ENCODE measurements at regions of chr12 and their contacts with region 1.

Region 1: GRCh38 chr12:115916910-115917668 is 360.4 kb downstream of the MED13L start:
- DNase-seq: peak; percentile 50 to 87 (median 78)
- ATAC-seq: peak; percentile 96
- H3K4me3 ChIP-seq: no peak overlapping the region
- H3K27ac ChIP-seq: no peak overlapping the region
- H3K4me1 ChIP-seq: peaks cover 0 to 7% of the 10 kb centered on the region in 2 experiments; a peak in 1 of 5 replicates
- H3K27me3 ChIP-seq: peaks cover 0 to 5% of the 10 kb centered on the region in 2 experiments; a peak in 1 of 5 replicates
- CTCF ChIP-seq: peak; percentile 84 to 89 (median 85)
- EP300 ChIP-seq: no peak
- POLR2A ChIP-seq: no peak
- RAD21 ChIP-seq: peak; percentile 68 to 89

Region 2: GRCh38 chr12:114625294-114625851 is 1291.7 kb before region 1 on chr12:
- CTCF ChIA-PET with region 1: interaction called, 13 read pairs
- POLR2A ChIA-PET with region 1: no interaction called
- in situ Hi-C with region 1: no loop called
- intact Hi-C with region 1: no loop called
- DNase-seq: peak; percentile 48 to 68 (median 63)
- ATAC-seq: peak; percentile 85
- H3K4me3 ChIP-seq: no peak overlapping the region
- H3K27ac ChIP-seq: no peak overlapping the region
- H3K4me1 ChIP-seq: no peaks in the 10 kb centered on the region
- H3K27me3 ChIP-seq: no peaks in the 10 kb centered on the region; a peak in 1 of 5 replicates
- CTCF ChIP-seq: peak; percentile 71 to 77 (median 75)
- EP300 ChIP-seq: no peak
- POLR2A ChIP-seq: no peak
- RAD21 ChIP-seq: peak in 1 of 2 experiments; percentile 65

Region 3: GRCh38 chr12:114662512-114663177 is 1254.4 kb before region 1 on chr12:
- CTCF ChIA-PET with region 1: interaction called, 16 read pairs
- POLR2A ChIA-PET with region 1: interaction called, 3 read pairs
- in situ Hi-C with region 1: loop called (anchors 5 kb)
- intact Hi-C with region 1: loop called (anchors 5 kb)
- DNase-seq: peak; percentile 57 to 69 (median 68)
- ATAC-seq: peak; percentile 75
- H3K4me3 ChIP-seq: no peak overlapping the region
- H3K27ac ChIP-seq: no peak overlapping the region
- H3K4me1 ChIP-seq: peaks cover 0 to 8% of the 10 kb centered on the region in 2 experiments; a peak in 2 of 5 replicates
- H3K27me3 ChIP-seq: peaks cover 15 to 19% of the 10 kb centered on the region in 2 experiments; a peak in 3 of 5 replicates
- CTCF ChIP-seq: peak; percentile 79 to 88 (median 85)
- EP300 ChIP-seq: no peak
- POLR2A ChIP-seq: no peak
- RAD21 ChIP-seq: peak; percentile 81 to 89

Region 4: GRCh38 chr12:115794659-115795081 is 122.4 kb before region 1 on chr12:
- CTCF ChIA-PET with region 1: interaction called, 13 read pairs
- POLR2A ChIA-PET with region 1: no interaction called
- in situ Hi-C with region 1: no loop called
- intact Hi-C with region 1: loop called (anchors 10 kb)
- DNase-seq: no peak
- ATAC-seq: no peak
- H3K4me3 ChIP-seq: no peak overlapping the region
- H3K27ac ChIP-seq: no peak overlapping the region
- H3K4me1 ChIP-seq: no peaks in the 10 kb centered on the region
- H3K27me3 ChIP-seq: peaks cover 0 to 6% of the 10 kb centered on the region in 2 experiments; a peak in 3 of 5 replicates
- CTCF ChIP-seq: peak in 1 of 3 experiments; percentile 24; a peak in 1 of 6 replicates
- EP300 ChIP-seq: no peak
- POLR2A ChIP-seq: no peak
- RAD21 ChIP-seq: peak in 1 of 2 experiments; percentile 22; a peak in 1 of 4 replicates

Region 5: DNA sequence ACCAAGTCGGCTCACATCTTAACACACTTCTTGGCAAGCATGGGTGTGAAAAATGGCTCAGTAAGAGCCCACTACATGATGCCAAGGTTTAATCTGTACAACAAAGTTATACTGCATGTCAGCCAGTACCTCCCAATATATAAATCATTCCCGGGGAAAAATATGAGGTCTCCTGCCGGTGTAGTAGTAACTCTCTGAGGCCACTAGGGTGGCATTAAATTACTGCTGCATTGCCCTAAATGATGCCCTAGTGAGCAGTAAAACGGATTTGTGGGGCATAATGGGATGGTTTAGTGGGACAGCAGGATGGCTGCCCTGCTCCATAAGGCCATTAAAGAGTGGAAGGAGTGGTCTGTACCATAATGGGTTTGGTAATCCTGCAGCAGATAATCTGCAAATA is 92.7 kb after region 1 on chr12:
- CTCF ChIA-PET with region 1: no interaction called
- POLR2A ChIA-PET with region 1: no interaction called
- in situ Hi-C with region 1: no loop called
- intact Hi-C with region 1: no loop called
- DNase-seq: no peak
- ATAC-seq: no peak
- H3K4me3 ChIP-seq: no peak overlapping the region
- H3K27ac ChIP-seq: no peak overlapping the region
- H3K4me1 ChIP-seq: no peaks in the 10 kb centered on the region
- H3K27me3 ChIP-seq: no peaks in the 10 kb centered on the region
- CTCF ChIP-seq: 0 out of 6 replicates have a peak, but pooled peaks of 1 of the 3 experiments have one; percentile 21
- EP300 ChIP-seq: no peak
- POLR2A ChIP-seq: no peak
- RAD21 ChIP-seq: no peak

Measured in K562 (cell line).